Endothelial cell of umbilical vein (primary cell): ENCODE measurements at regions of chr16 and their contacts with region 1.

Region 1: GRCh38 chr16:75305364-75306098 is 54.1 kb upstream of the BCAR1 start:
- DNase-seq: peak; percentile 98
- H3K4me3 ChIP-seq: peak overlapping the region in 1 of 3 experiments; percentile 13
- H3K27ac ChIP-seq: peak overlapping the region; percentile 91
- H3K4me1 ChIP-seq: peaks cover 38% of the 10 kb centered on the region
- H3K27me3 ChIP-seq: no peaks in the 10 kb centered on the region
- CTCF ChIP-seq: no peak
- POLR2A ChIP-seq: no peak

Region 2: DNA sequence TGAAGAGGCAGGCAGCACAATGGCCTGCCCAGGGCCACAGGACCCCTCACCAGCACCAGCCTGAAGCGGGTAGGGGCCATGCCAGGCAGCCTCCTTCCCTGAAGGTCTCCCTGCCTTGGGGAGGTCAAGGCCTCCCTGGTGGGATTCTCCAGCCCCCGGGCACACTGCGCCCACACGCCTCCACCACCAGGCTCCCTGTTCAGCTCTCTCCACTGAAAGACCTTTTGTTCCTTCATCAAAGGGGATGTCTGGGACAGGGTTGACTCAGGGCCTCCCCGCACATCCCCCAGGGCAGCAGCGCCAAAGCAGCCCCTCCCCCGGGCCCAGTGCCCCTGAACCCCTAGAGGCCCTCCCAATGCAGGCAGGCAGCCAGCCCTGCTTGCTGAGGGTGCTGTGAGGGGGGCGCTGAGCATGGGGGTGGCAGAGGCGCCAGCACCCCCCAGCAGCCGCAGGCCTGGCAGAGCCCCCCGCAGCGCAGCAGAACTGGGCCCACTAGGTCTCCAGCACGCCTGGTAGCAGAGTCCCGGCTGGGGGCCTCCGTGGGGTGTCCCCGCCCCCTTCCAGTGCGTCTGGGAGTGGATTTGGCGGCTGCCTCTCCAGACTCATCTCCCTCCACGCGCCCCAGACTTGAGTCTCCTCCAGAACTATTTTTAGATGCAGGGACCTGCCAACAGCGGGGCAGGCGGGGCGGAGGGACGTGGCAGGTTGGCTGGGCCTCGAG is 67.2 kb before region 1 on chr16:
- CTCF ChIA-PET with region 1: interaction called, 15 read pairs
- POLR2A ChIA-PET with region 1: no interaction called
- dilution Hi-C with region 1: no loop called
- intact Hi-C with region 1: no loop called
- DNase-seq: no peak
- H3K4me3 ChIP-seq: no peak overlapping the region
- H3K27ac ChIP-seq: peak overlapping the region; percentile 48
- H3K4me1 ChIP-seq: peaks cover 10% of the 10 kb centered on the region
- H3K27me3 ChIP-seq: no peaks in the 10 kb centered on the region
- CTCF ChIP-seq: no peak
- POLR2A ChIP-seq: no peak

Region 3: DNA sequence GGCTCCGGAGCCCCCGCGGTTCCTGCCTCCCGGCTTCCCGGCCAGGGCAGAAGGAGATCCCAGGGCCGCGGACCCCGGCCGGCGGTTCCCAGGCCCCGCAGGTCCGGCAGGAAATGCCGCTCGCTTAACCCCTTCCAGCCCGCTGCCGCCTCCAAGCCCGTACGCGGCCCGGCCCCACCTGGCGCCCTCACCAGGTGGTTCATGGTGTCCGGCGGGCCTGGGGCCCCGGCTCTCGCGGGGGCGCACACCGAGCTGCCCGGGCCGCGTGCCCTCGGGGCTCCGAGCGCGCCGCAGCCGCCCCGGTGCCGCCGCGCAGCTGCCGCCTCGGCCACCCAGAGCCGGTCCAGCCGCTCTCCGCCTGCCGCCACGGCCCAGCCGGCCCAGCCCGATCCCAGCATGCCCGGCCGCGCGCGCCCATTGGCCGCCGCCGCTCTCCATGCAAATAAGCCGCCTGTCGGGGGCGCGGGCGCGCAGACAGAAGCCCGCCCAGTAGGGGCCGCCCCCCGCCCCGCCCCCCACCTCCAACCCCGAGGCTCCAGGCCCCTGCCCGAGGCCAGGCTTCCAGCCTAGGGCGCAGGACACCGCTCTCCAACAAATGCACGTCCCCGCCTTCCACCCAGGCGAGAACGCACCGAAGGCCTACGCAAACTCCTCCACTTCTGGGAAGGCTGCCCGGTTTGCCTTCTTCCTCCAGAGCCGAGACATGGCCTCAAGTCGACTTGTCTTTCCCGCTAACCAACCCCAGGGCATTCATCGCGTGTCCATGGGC is 54.1 kb before region 1 on chr16 and contains the start of gene BCAR1:
- CTCF ChIA-PET with region 1: interaction called, 5 read pairs
- POLR2A ChIA-PET with region 1: interaction called, 9 read pairs
- dilution Hi-C with region 1: no loop called
- intact Hi-C with region 1: loop called (anchors 1 kb)
- DNase-seq: peak; percentile 89
- H3K4me3 ChIP-seq: peak within 1 kb of the TSS; percentile 50 to 83 (median 80)
- H3K27ac ChIP-seq: peak within 1 kb of the TSS; percentile 92
- H3K4me1 ChIP-seq: peaks cover 80% of the 10 kb centered on the region
- H3K27me3 ChIP-seq: no peaks in the 10 kb centered on the region
- CTCF ChIP-seq: no peak
- POLR2A ChIP-seq: peak; percentile 73
- total RNA-seq, gene BCAR1: 237 and 267 TPM in 2 replicates

Region 4: GRCh38 chr16:75288596-75289120 is 16.9 kb before region 1 on chr16:
- CTCF ChIA-PET with region 1: interaction called, 4 read pairs
- POLR2A ChIA-PET with region 1: no interaction called
- dilution Hi-C with region 1: no loop called
- intact Hi-C with region 1: loop called (anchors 1 kb)
- DNase-seq: no peak
- H3K4me3 ChIP-seq: no peak overlapping the region
- H3K27ac ChIP-seq: peak overlapping the region; percentile 72
- H3K4me1 ChIP-seq: peaks cover 27% of the 10 kb centered on the region
- H3K27me3 ChIP-seq: no peaks in the 10 kb centered on the region
- CTCF ChIP-seq: no peak
- POLR2A ChIP-seq: no peak

Region 5: GRCh38 chr16:75351183-75351582 is 45.7 kb after region 1 on chr16:
- CTCF ChIA-PET with region 1: interaction called, 3 read pairs
- POLR2A ChIA-PET with region 1: no interaction called
- dilution Hi-C with region 1: no loop called
- intact Hi-C with region 1: loop called (anchors 1 kb)
- DNase-seq: peak; percentile 92
- H3K4me3 ChIP-seq: peak overlapping the region in 1 of 3 experiments; percentile 39
- H3K27ac ChIP-seq: peak overlapping the region; percentile 94
- H3K4me1 ChIP-seq: peaks cover 20% of the 10 kb centered on the region
- H3K27me3 ChIP-seq: no peaks in the 10 kb centered on the region
- CTCF ChIP-seq: no peak
- POLR2A ChIP-seq: no peak